ENCODE measurements at regions of chr17 and their contacts with region 1.

Region 1: DNA sequence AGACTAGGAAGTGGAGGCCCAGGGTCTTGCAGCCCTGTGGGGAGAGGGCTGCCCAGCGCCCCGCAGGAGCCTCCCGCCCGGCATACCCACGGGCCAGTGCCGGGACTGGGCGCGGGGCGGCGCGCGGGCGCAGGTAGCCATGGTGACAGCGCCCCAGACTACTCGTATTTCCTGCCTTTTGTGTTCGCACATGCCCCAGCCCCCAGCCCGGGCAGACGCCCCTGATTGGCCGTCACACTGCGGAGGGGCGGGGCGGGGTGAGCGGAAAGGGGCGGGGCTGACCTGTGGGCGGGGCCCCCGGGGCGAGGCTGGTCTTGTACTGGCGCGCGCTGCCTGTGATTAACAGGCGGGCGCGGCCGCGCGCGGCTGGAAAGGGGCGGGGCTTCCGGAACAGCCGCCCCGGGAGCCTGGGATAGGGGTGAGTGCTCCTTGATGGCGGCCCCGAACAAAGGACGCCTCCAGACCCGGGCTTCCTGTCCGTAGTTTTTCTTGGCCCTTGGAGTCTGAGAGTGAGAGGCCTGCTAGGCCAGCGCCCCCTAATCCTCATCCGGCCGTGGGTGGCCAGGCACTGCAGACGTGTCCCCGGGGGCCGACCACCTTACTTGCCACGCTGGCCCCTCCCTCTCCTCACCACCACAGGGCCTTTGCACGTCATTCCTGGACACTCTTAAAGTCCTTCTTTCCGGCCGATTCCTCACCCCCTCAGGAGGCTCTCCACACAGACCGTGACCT is 71.0 kb downstream of the RAI1 start:
- DNase-seq: peak; percentile 93 to 98 (median 97)
- ATAC-seq: peak; percentile 96
- H3K4me3 ChIP-seq: peak overlapping the region; percentile 62
- H3K4me3 Mint-ChIP-seq: peak overlapping the region; percentile 78 to 99 (median 92)
- H3K27ac ChIP-seq: peak overlapping the region; percentile 89
- H3K27ac Mint-ChIP-seq: peak overlapping the region; percentile 96 to 100 (median 98)
- H3K4me1 ChIP-seq: peaks cover 39 to 67% of the 10 kb centered on the region in 2 donors
- H3K4me1 Mint-ChIP-seq: peaks cover 50 to 93% (median 77%) of the 10 kb centered on the region in 7 donors
- H3K27me3 ChIP-seq: no peaks in the 10 kb centered on the region
- H3K27me3 Mint-ChIP-seq: no peaks in the 10 kb centered on the region

Region 2: GRCh38 chr17:17591355-17592298 is 160.6 kb before region 1 on chr17 and contains the start of gene PEMT:
- CTCF ChIA-PET with region 1: no interaction called
- POLR2A ChIA-PET with region 1: no interaction called
- intact Hi-C with region 1: loop called (anchors 1 to 2 kb)
- DNase-seq: peak; percentile 78 to 96 (median 93)
- ATAC-seq: peak; percentile 95
- H3K4me3 ChIP-seq: peak within 1 kb of the TSS; percentile 93
- H3K4me3 Mint-ChIP-seq: peak within 1 kb of the TSS; percentile 87 to 99 (median 93)
- H3K27ac ChIP-seq: peak within 1 kb of the TSS; percentile 79
- H3K27ac Mint-ChIP-seq: peak within 1 kb of the TSS; percentile 86 to 100 (median 93)
- H3K4me1 ChIP-seq: peaks cover 16 to 18% of the 10 kb centered on the region in 2 donors
- H3K4me1 Mint-ChIP-seq: peaks cover 14 to 32% (median 19%) of the 10 kb centered on the region in 7 donors
- H3K27me3 ChIP-seq: no peaks in the 10 kb centered on the region
- H3K27me3 Mint-ChIP-seq: no peaks in the 10 kb centered on the region
- total RNA-seq, gene PEMT: 9.5 to 15.0 (median 12.1) TPM

Region 3: DNA sequence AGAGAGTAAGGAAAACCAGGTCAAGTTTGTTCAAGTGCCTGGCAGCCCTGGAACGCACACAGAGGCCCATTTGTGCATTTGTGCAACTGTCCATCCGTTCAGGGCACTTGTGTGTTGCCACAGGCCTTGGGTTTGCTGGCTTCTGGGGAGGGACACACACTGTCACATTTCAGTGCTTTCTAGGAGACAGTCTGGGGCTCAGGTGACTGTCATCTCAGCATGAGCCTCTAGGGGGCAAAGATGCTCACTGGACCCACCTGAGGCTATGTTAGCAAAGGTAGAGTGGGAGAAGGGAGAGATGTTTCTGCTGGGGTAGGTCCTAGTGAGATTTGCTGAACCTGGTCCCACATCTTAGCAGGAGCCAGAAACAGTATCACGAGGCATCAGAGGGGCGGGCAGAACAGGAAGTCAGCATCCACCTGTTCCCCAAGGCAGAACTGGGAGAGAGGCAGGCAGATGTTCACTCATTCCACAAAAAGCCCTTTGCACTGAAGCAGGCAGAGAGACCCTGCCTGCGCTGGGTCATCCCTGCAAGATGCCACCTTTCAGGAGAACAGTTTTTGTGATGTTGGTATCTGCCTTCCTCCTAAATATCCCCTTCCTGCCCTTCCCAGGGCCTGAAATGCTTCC is 22.5 kb before region 1 on chr17:
- CTCF ChIA-PET with region 1: no interaction called
- POLR2A ChIA-PET with region 1: no interaction called
- intact Hi-C with region 1: loop called in 1 of 2 experiments (anchors 1 kb)
- DNase-seq: peak in 8 of 9 donors; percentile 39 to 74 (median 63)
- ATAC-seq: peak; percentile 87
- H3K4me3 ChIP-seq: no peak overlapping the region
- H3K4me3 Mint-ChIP-seq: peak overlapping the region in 1 of 10 donors; percentile 8
- H3K27ac ChIP-seq: no peak overlapping the region
- H3K27ac Mint-ChIP-seq: peak overlapping the region in 7 of 9 donors; percentile 35 to 92 (median 68)
- H3K4me1 ChIP-seq: peaks cover 0 to 15% of the 10 kb centered on the region in 2 donors
- H3K4me1 Mint-ChIP-seq: peaks cover 11 to 40% (median 35%) of the 10 kb centered on the region in 7 donors
- H3K27me3 ChIP-seq: no peaks in the 10 kb centered on the region
- H3K27me3 Mint-ChIP-seq: peaks cover 0 to 5% (median 0%) of the 10 kb centered on the region in 5 donors

Region 4: DNA sequence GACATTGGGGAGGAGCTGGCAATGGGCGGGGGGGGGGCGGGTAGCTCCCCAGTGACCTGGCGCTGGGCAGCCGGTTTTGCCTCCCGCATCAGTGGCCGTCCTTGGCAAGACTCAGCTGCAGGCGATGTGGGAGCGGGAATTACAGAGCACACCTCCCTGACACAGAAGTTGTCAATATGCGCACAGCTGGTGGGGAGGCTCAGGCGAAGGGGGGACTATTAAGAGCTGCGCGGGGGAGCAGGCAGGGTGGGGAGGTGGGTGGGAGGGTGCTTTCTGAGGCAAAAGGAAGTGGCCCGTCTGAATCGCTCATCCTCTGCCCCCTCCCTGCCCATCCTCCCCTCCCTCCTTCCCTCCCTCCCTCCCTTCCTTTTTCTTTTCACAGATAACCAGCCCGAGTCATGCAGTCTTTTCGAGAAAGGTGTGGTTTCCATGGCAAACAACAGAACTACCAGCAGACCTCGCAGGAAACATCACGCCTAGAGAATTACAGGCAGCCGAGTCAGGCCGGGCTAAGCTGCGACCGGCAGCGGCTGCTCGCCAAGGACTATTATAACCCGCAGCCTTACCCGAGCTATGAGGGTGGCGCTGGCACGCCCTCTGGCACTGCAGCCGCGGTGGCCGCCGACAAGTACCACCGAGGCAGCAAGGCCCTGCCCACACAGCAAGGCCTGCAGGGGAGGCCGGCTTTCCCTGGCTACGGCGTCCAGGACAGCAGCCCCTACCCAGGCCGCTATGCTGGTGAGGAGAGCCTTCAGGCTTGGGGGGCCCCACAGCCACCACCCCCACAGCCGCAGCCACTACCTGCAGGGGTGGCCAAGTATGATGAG is 40.5 kb after region 1 on chr17:
- CTCF ChIA-PET with region 1: no interaction called
- POLR2A ChIA-PET with region 1: interaction called, 3 read pairs
- intact Hi-C with region 1: loop called (anchors 1 kb)
- DNase-seq: peak in 8 of 9 donors; percentile 42 to 81 (median 72)
- ATAC-seq: peak; percentile 86
- H3K4me3 ChIP-seq: peak overlapping the region; percentile 35
- H3K4me3 Mint-ChIP-seq: peak overlapping the region; percentile 58 to 79 (median 70)
- H3K27ac ChIP-seq: peak overlapping the region; percentile 67
- H3K27ac Mint-ChIP-seq: peak overlapping the region; percentile 85 to 95 (median 88)
- H3K4me1 ChIP-seq: peaks cover 8 to 19% of the 10 kb centered on the region in 2 donors
- H3K4me1 Mint-ChIP-seq: peaks cover 20 to 38% (median 29%) of the 10 kb centered on the region in 7 donors
- H3K27me3 ChIP-seq: no peaks in the 10 kb centered on the region
- H3K27me3 Mint-ChIP-seq: no peaks in the 10 kb centered on the region

Region 5: GRCh38 chr17:17859909-17860765 is 107.9 kb after region 1 on chr17:
- CTCF ChIA-PET with region 1: interaction called, 5 read pairs
- POLR2A ChIA-PET with region 1: no interaction called
- intact Hi-C with region 1: loop called in 1 of 2 experiments (anchors 1 kb)
- DNase-seq: peak; percentile 50 to 77 (median 68)
- ATAC-seq: peak; percentile 97
- H3K4me3 ChIP-seq: no peak overlapping the region
- H3K4me3 Mint-ChIP-seq: no peak overlapping the region
- H3K27ac ChIP-seq: no peak overlapping the region
- H3K27ac Mint-ChIP-seq: peak overlapping the region in 3 of 9 donors; percentile 46 to 70 (median 58)
- H3K4me1 ChIP-seq: peaks cover 0 to 28% of the 10 kb centered on the region in 2 donors
- H3K4me1 Mint-ChIP-seq: peaks cover 13 to 67% (median 52%) of the 10 kb centered on the region in 7 donors
- H3K27me3 ChIP-seq: no peaks in the 10 kb centered on the region
- H3K27me3 Mint-ChIP-seq: no peaks in the 10 kb centered on the region

Region 6: GRCh38 chr17:18033442-18034099 is 281.3 kb after region 1 on chr17:
- CTCF ChIA-PET with region 1: no interaction called
- POLR2A ChIA-PET with region 1: no interaction called
- intact Hi-C with region 1: loop called (anchors 1 to 2 kb)
- DNase-seq: peak in 8 of 9 donors; percentile 37 to 81 (median 70)
- ATAC-seq: peak; percentile 98
- H3K4me3 ChIP-seq: no peak overlapping the region
- H3K4me3 Mint-ChIP-seq: no peak overlapping the region
- H3K27ac ChIP-seq: no peak overlapping the region
- H3K27ac Mint-ChIP-seq: peak overlapping the region in 4 of 9 donors; percentile 3 to 79 (median 42)
- H3K4me1 ChIP-seq: peaks cover 17 to 21% of the 10 kb centered on the region in 2 donors
- H3K4me1 Mint-ChIP-seq: peaks cover 19 to 42% (median 31%) of the 10 kb centered on the region in 7 donors
- H3K27me3 ChIP-seq: no peaks in the 10 kb centered on the region
- H3K27me3 Mint-ChIP-seq: no peaks in the 10 kb centered on the region

Region 7: GRCh38 chr17:18183334-18184142 is 431.3 kb after region 1 on chr17 and contains the start of gene ALKBH5:
- CTCF ChIA-PET with region 1: no interaction called
- POLR2A ChIA-PET with region 1: no interaction called
- intact Hi-C with region 1: loop called (anchors 2 kb)
- DNase-seq: peak; percentile 97 to 99 (median 99)
- ATAC-seq: peak; percentile 88
- H3K4me3 ChIP-seq: peak within 1 kb of the TSS; percentile 78
- H3K4me3 Mint-ChIP-seq: peak within 1 kb of the TSS; percentile 83 to 99 (median 94)
- H3K27ac ChIP-seq: peak within 1 kb of the TSS; percentile 93
- H3K27ac Mint-ChIP-seq: peak within 1 kb of the TSS; percentile 96 to 99 (median 98)
- H3K4me1 ChIP-seq: peaks cover 36 to 40% of the 10 kb centered on the region in 2 donors
- H3K4me1 Mint-ChIP-seq: peaks cover 40 to 59% (median 46%) of the 10 kb centered on the region in 7 donors
- H3K27me3 ChIP-seq: no peaks in the 10 kb centered on the region
- H3K27me3 Mint-ChIP-seq: peaks cover 0 to 3% (median 0%) of the 10 kb centered on the region in 5 donors
- total RNA-seq, gene ALKBH5: 97.4 to 135 (median 108) TPM